ENCODE measurements at regions of chr9 and their contacts with region 1.

Region 1: DNA sequence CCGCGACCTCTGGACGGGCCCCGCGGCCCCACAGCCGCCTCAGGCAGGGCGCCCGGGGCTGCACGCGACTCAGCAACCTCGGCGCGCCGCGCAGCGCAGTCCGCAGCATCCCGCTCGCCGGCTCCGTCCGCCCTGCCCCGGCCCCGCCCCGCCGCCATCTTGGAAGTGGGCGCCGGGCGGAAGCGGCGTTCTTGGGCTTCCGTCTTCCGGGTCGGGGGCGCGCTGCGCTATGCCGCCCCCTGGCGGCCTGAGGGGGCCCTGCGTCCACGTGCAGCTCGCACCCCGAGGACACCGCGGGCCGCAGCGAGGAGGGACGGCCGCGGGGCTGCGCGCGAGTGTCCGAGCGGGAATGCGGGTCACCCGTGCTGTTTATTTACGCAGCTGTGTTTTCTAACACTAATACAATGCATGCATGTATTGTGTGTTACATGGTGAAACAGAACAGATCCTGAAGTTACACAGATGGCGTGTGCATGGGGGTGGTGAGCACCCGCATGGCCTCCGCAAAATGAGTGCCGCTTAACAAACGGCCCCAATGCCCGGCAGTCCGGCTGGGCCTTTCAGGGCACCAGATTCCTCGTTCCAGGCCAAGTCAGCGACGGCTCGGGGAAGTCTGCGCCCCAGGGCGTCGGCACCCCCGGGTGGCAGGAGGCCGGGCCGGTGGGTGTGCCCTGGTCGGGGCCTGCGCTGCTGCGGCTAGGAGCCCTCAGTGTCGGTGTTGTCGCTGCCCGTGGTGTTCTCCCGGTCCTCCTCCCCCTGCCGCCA is at the start of gene DNLZ:
- DNase-seq: peak; percentile 93
- H3K4me3 ChIP-seq: peak within 1 kb of the TSS; percentile 66 to 97 (median 87)
- H3K27ac ChIP-seq: peak within 1 kb of the TSS; percentile 88 to 95 (median 92)
- H3K4me1 ChIP-seq: peaks cover 0 to 39% (median 34%) of the 10 kb centered on the region in 4 donors
- H3K27me3 ChIP-seq: peaks cover 0 to 9% (median 6%) of the 10 kb centered on the region in 3 donors
- CTCF ChIP-seq: peak; percentile 77 to 99 (median 92)
- EP300 ChIP-seq: no peak
- POLR2A ChIP-seq: no peak
- total RNA-seq, gene DNLZ: 19.7 to 41.9 (median 37.8) TPM

Region 2: GRCh38 chr9:136147890-136148714 is 215.7 kb before region 1 on chr9:
- intact Hi-C with region 1: no loop called
- DNase-seq: no peak
- H3K4me3 ChIP-seq: no peak overlapping the region
- H3K27ac ChIP-seq: no peak overlapping the region
- H3K4me1 ChIP-seq: no peaks in the 10 kb centered on the region
- H3K27me3 ChIP-seq: peaks cover 12 to 55% (median 53%) of the 10 kb centered on the region in 3 donors
- CTCF ChIP-seq: no peak
- EP300 ChIP-seq: no peak
- POLR2A ChIP-seq: no peak

Region 3: GRCh38 chr9:136312436-136312835 is 51.4 kb before region 1 on chr9:
- intact Hi-C with region 1: loop called (anchors 1 kb)
- DNase-seq: no peak
- H3K4me3 ChIP-seq: no peak overlapping the region
- H3K27ac ChIP-seq: no peak overlapping the region
- H3K4me1 ChIP-seq: no peaks in the 10 kb centered on the region
- H3K27me3 ChIP-seq: peaks cover 11 to 50% (median 25%) of the 10 kb centered on the region in 3 donors
- CTCF ChIP-seq: peak; percentile 20 to 57 (median 48)
- EP300 ChIP-seq: no peak
- POLR2A ChIP-seq: no peak

Region 4: DNA sequence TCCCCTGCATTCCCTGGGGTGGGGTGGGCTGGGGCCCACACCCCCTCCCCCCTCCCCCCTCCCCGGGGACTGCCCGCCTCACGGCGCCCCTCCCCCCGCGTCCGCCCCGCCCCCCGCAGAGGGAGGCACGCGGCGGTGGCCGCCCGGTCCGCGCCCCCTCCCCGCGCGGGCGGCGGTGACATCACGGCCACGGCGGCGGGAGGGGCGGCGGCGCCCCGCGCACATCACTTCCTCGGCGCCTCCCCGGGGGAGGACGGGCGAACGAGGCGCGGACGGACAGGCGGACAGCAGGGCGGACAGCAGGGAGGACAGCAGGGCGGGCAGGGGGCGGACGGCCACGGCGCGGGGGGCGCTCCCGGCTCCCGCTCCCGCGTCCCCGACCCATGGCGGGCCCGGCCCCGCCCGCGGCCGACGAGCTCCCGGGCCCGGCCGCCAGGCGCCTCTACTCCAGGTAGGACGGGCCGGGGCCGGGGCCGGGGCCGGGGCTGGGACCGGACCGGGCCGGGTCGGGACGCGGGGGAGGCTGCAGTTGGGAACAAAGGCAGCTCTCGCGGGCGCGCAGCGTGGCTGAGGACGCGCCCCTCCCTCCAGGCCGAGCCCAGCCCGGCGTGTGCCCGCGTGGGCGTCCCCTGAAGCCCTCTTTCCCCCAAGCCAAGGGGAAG is 36.3 kb before region 1 on chr9 and contains the start of gene GPSM1:
- intact Hi-C with region 1: loop called (anchors 5 kb)
- DNase-seq: peak; percentile 81
- H3K4me3 ChIP-seq: peak within 1 kb of the TSS; percentile 50 to 84 (median 72)
- H3K27ac ChIP-seq: peak within 1 kb of the TSS; percentile 74 to 79 (median 78)
- H3K4me1 ChIP-seq: peaks cover 0 to 37% (median 28%) of the 10 kb centered on the region in 4 donors
- H3K27me3 ChIP-seq: no peaks in the 10 kb centered on the region
- CTCF ChIP-seq: no peak
- EP300 ChIP-seq: no peak
- POLR2A ChIP-seq: no peak
- total RNA-seq, gene GPSM1: 5.0 to 16.1 (median 12.2) TPM

Region 5: GRCh38 chr9:136339173-136339957 is 24.4 kb before region 1 on chr9:
- intact Hi-C with region 1: loop called (anchors 1 kb)
- DNase-seq: no peak
- H3K4me3 ChIP-seq: no peak overlapping the region
- H3K27ac ChIP-seq: no peak overlapping the region
- H3K4me1 ChIP-seq: peaks cover 0 to 23% (median 21%) of the 10 kb centered on the region in 4 donors
- H3K27me3 ChIP-seq: no peaks in the 10 kb centered on the region
- CTCF ChIP-seq: peak; percentile 78 to 92 (median 88)
- EP300 ChIP-seq: no peak
- POLR2A ChIP-seq: no peak

Region 6: GRCh38 chr9:136400038-136400834 is 36.4 kb after region 1 on chr9 and contains the start of gene SNAPC4:
- intact Hi-C with region 1: loop called (anchors 1 kb)
- DNase-seq: peak; percentile 91
- H3K4me3 ChIP-seq: peak within 1 kb of the TSS; percentile 70 to 99 (median 94)
- H3K27ac ChIP-seq: peak within 1 kb of the TSS; percentile 44 to 76 (median 65)
- H3K4me1 ChIP-seq: peaks cover 0 to 29% (median 21%) of the 10 kb centered on the region in 4 donors
- H3K27me3 ChIP-seq: no peaks in the 10 kb centered on the region
- CTCF ChIP-seq: peak; percentile 49 to 95 (median 62)
- EP300 ChIP-seq: no peak
- POLR2A ChIP-seq: peak; percentile 12 to 32
- total RNA-seq, gene SNAPC4: 2.6 to 10.8 (median 5.1) TPM

Region 7: GRCh38 chr9:137095664-137096517 is 732.1 kb after region 1 on chr9:
- intact Hi-C with region 1: no loop called
- DNase-seq: no peak
- H3K4me3 ChIP-seq: no peak overlapping the region
- H3K27ac ChIP-seq: no peak overlapping the region
- H3K4me1 ChIP-seq: no peaks in the 10 kb centered on the region
- H3K27me3 ChIP-seq: no peaks in the 10 kb centered on the region
- CTCF ChIP-seq: no peak
- EP300 ChIP-seq: no peak
- POLR2A ChIP-seq: no peak

Measured in sigmoid colon (tissue), 7 donors.